ENCODE measurements at regions of chr2 and their contacts with region 1.

Region 1: DNA sequence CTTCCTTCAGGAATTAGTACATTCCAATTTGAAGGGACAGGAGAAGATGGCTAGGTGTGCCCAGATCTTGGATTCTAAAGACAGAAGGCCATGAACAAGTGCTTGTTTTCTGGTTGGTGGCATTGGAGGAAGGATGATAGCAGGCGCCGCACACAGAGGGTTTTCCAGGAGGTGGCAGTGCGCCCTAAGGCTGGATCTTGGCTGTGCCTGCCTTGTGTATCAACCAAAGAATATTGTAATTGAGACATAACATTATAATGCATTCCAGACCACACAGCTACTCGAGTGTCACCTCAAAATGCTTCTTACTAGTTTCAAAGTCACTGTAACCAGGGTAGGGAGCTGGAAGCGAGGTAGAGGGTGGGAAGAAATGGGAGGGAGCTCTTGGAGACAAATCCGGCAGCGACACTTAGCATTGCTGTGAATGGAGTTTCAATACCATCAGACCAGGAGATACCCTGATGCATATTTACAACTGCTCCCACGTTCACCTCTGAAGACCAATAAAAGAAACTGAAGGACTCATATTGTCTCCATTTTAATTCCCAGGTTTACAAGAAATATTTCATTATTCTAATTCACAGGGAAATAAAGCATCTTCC is 42.5 kb downstream of the CPO start:
- DNase-seq: peak; percentile 76
- ATAC-seq: peak; percentile 87
- H3K4me3 ChIP-seq: no peak overlapping the region
- H3K27ac ChIP-seq: no peak overlapping the region
- H3K4me1 ChIP-seq: peaks cover 9% of the 10 kb centered on the region
- H3K27me3 ChIP-seq: peaks cover 3% of the 10 kb centered on the region
- CTCF ChIP-seq: peak; percentile 97
- POLR2A ChIP-seq: peak; percentile 48; the same call in 1 of the 2 replicates
- RAD21 ChIP-seq: peak; percentile 99

Region 2: GRCh38 chr2:206343816-206344215 is 638.0 kb before region 1 on chr2:
- CTCF ChIA-PET with region 1: no interaction called
- POLR2A ChIA-PET with region 1: no interaction called
- dilution Hi-C with region 1: no loop called
- in situ Hi-C with region 1: no loop called
- intact Hi-C with region 1: no loop called
- DNase-seq: no peak
- ATAC-seq: no peak
- H3K4me3 ChIP-seq: no peak overlapping the region
- H3K27ac ChIP-seq: no peak overlapping the region
- H3K4me1 ChIP-seq: no peaks in the 10 kb centered on the region
- H3K27me3 ChIP-seq: no peaks in the 10 kb centered on the region
- CTCF ChIP-seq: no peak
- POLR2A ChIP-seq: no peak
- RAD21 ChIP-seq: no peak

Region 3: DNA sequence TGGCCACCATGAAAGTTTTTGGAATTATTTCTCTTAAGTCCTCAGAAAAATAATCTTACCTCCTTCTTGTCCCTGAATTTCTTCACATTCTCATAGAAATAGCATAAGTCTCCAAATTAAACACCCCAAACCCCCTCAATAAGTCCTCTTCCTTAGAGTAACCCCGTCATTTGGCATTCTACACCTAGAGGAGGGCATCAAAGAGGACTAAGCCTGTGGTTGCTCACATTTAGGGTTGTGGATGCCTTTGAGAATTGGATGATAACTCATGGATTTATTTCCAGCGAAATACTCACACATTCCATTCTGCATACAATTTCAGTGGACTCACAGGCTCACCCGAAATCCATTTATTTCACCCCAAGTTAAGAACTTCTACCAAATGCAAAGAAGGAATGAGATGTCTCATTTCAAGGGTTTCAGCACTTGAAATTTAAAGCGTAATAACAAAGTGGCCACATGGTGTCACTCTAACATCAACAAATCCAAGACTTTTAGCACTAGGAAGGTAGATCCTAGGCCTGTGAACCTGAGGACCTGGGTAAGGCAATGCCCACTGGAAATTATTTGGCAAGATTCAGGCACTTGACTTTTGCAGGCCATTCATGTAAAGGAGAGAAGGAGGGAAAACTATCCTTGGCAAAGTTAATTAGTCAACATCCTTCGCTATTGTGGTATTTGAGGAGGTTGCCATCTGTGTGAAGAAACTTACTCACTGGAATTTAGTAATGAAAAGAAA is 288.3 kb before region 1 on chr2:
- CTCF ChIA-PET with region 1: no interaction called
- POLR2A ChIA-PET with region 1: no interaction called
- dilution Hi-C with region 1: no loop called
- in situ Hi-C with region 1: no loop called
- intact Hi-C with region 1: loop called (anchors 5 kb)
- DNase-seq: peak; percentile 69
- ATAC-seq: peak; percentile 83
- H3K4me3 ChIP-seq: no peak overlapping the region
- H3K27ac ChIP-seq: no peak overlapping the region
- H3K4me1 ChIP-seq: no peaks in the 10 kb centered on the region
- H3K27me3 ChIP-seq: peaks cover under 1% of the 10 kb centered on the region
- CTCF ChIP-seq: peak; percentile 69
- POLR2A ChIP-seq: no peak
- RAD21 ChIP-seq: peak; percentile 79

Region 4: GRCh38 chr2:207073801-207074678 is 92.2 kb after region 1 on chr2:
- CTCF ChIA-PET with region 1: no interaction called
- POLR2A ChIA-PET with region 1: interaction called, 5 read pairs
- dilution Hi-C with region 1: no loop called
- in situ Hi-C with region 1: no loop called
- intact Hi-C with region 1: loop called (anchors 10 kb)
- DNase-seq: peak; percentile 12
- ATAC-seq: peak; percentile 48
- H3K4me3 ChIP-seq: no peak overlapping the region
- H3K27ac ChIP-seq: no peak overlapping the region
- H3K4me1 ChIP-seq: 0 out of 2 replicates have a peak, but pooled peaks cover 2% of the 10 kb centered on the region
- H3K27me3 ChIP-seq: no peaks in the 10 kb centered on the region
- CTCF ChIP-seq: no peak
- POLR2A ChIP-seq: no peak; the same call in none of the 2 replicates
- RAD21 ChIP-seq: no peak

Region 5: DNA sequence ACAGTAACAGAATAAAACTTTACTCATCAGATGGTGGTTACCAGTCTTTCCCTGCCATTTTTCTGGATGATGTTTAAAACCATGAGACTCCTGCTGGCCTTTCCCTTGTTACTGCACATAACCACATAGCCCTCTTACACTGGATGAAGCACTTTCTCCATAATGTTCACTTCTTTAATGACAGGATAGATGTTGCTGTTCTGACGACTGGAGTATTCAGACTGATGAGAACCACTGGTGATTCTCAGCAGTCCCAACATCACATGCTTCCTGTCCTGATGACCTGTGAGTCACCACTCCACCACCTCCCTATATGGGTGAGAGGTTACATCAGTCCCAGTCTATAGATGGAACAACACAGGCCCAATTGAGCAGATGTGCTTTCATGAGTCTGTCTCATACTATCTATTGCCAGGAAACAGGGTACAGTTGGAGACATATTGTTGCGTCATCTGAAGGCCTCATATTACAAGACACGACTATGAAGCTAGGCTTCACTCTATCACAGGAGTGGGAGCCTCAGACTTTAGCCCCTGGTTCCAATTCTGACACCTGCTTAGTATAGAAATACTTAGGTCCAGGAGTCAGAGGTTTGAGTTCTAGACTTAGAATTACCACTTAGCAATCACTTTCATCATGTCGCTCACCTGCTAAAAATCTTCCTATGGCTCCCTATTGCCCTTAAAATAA is 329.6 kb after region 1 on chr2:
- CTCF ChIA-PET with region 1: no interaction called
- POLR2A ChIA-PET with region 1: no interaction called
- dilution Hi-C with region 1: no loop called
- in situ Hi-C with region 1: no loop called
- intact Hi-C with region 1: loop called (anchors 1 kb)
- DNase-seq: peak; percentile 100
- ATAC-seq: peak; percentile 82
- H3K4me3 ChIP-seq: no peak overlapping the region
- H3K27ac ChIP-seq: peak overlapping the region; percentile 44; the same call in 1 of the 2 replicates
- H3K4me1 ChIP-seq: peaks cover 12% of the 10 kb centered on the region
- H3K27me3 ChIP-seq: no peaks in the 10 kb centered on the region
- CTCF ChIP-seq: peak; percentile 51
- POLR2A ChIP-seq: no peak; the same call in 1 of the 2 replicates
- RAD21 ChIP-seq: peak; percentile 65

Region 6: GRCh38 chr2:207473049-207473930 is 491.4 kb after region 1 on chr2:
- CTCF ChIA-PET with region 1: interaction called, 18 read pairs
- POLR2A ChIA-PET with region 1: interaction called, 3 read pairs
- dilution Hi-C with region 1: no loop called
- in situ Hi-C with region 1: loop called (anchors 5 kb)
- intact Hi-C with region 1: loop called (anchors 1 kb)
- DNase-seq: peak; percentile 88
- ATAC-seq: peak; percentile 83
- H3K4me3 ChIP-seq: peak overlapping the region; percentile 14; the same call in 1 of the 2 replicates
- H3K27ac ChIP-seq: peak overlapping the region; percentile 62
- H3K4me1 ChIP-seq: peaks cover 7% of the 10 kb centered on the region
- H3K27me3 ChIP-seq: no peaks in the 10 kb centered on the region
- CTCF ChIP-seq: peak; percentile 92
- POLR2A ChIP-seq: no peak
- RAD21 ChIP-seq: peak; percentile 98

Region 7: DNA sequence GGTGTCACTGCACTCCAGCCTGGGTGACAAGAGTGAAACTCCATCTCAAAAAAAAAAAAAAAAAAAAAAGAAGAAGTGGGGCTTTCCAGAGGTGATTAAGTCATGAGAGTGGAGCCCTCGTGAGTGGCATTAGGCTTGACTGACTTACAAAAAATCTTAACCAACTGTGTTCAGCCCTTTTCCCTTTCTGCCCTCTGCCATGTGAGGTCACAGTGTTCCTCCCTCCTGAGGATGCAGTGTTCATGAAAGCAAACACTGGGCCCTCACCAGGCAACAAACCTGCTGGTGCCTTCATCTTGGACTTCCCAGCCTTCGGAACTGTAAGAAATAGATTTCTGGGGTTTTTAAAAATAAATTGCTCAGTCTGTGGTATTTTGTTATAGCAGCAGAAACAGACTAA is 680.4 kb after region 1 on chr2:
- CTCF ChIA-PET with region 1: no interaction called
- POLR2A ChIA-PET with region 1: no interaction called
- dilution Hi-C with region 1: no loop called
- in situ Hi-C with region 1: no loop called
- intact Hi-C with region 1: no loop called
- DNase-seq: no peak
- ATAC-seq: no peak
- H3K4me3 ChIP-seq: no peak overlapping the region
- H3K27ac ChIP-seq: no peak overlapping the region
- H3K4me1 ChIP-seq: no peaks in the 10 kb centered on the region
- H3K27me3 ChIP-seq: no peaks in the 10 kb centered on the region
- CTCF ChIP-seq: no peak
- POLR2A ChIP-seq: no peak
- RAD21 ChIP-seq: no peak

Region 8: GRCh38 chr2:207734264-207734635 is 752.4 kb after region 1 on chr2:
- CTCF ChIA-PET with region 1: no interaction called
- POLR2A ChIA-PET with region 1: no interaction called
- dilution Hi-C with region 1: no loop called
- in situ Hi-C with region 1: loop called (anchors 10 kb)
- intact Hi-C with region 1: loop called (anchors 10 kb)
- DNase-seq: peak; percentile 61
- ATAC-seq: peak; percentile 88
- H3K4me3 ChIP-seq: no peak overlapping the region
- H3K27ac ChIP-seq: no peak overlapping the region
- H3K4me1 ChIP-seq: no peaks in the 10 kb centered on the region
- H3K27me3 ChIP-seq: no peaks in the 10 kb centered on the region
- CTCF ChIP-seq: peak; percentile 53
- POLR2A ChIP-seq: no peak
- RAD21 ChIP-seq: peak; percentile 61